ENCODE measurements at regions of chr10 and their contacts with region 1.

Region 1: GRCh38 chr10:95693668-95694534 is at the start of gene TCTN3:
- DNase-seq: peak; percentile 99
- ATAC-seq: peak; percentile 100
- total RNA-seq, gene TCTN3: 9.7 TPM

Region 2: DNA sequence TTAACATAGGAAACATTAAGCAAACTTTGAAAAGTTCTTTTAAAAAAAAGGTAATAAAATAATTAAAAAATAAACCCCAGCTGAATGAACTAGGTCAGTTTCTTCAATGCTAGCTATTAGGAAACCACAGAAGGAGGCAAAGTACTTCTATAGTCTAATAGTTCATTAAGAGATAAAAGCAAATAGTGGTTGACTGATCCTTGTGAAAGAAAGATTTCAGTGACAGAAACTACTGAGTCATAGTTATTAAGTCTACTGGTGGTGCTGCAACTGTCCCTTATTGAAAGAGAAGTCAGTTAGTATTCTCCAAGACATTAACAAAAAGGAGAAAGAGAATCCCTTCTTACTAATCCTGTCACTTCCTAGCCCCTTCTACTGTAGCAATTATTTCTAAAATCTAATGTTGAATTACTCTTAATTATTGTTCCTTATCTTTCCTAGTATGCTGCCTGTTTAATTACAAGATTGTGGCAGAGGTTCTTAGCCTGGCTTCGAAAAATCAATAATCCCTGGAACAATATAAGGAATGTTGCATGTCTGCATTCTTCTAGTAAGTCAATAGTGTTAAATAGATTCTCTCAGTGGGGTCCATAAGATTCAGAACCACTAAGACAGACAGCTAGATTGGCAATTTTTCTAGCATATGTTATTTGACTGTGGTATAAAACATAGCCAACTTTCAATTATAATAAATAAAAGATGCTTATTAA is 18.3 kb before region 1 on chr10:
- intact Hi-C with region 1: no loop called
- DNase-seq: no peak
- ATAC-seq: no peak

Region 3: DNA sequence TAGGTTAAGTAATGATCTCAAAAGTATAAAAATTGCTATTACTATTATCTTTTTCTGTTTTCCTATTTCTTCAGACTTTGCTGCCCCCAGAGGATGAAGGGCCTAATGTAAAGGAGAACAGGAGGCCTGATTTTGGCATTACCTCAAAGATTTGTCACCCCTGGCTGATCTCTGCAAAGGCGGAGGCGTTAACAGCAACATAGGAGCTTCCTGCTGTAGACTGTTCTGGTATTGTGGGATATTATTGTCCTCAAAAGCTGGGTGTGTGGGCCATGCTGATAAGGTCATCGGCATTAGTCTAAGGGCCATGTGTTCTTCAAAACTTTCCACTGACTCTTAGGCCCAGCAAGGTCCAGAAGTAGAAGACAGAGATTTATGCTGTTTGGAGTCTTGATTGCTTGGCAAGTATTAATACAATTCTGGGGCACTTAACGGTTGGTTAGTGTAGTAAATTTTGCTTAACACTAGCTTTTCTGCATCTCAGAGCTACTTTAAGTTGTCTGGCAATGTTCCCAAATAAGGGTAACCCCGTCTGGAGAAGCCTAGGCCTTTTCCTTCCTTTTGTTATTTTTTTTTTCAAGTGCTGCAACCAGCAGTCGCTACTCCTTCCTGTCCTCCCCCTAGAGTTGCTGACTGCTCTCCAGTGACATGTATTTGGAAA is 48.0 kb after region 1 on chr10:
- intact Hi-C with region 1: loop called (anchors 2 kb)
- DNase-seq: no peak
- ATAC-seq: peak; percentile 62

Region 4: DNA sequence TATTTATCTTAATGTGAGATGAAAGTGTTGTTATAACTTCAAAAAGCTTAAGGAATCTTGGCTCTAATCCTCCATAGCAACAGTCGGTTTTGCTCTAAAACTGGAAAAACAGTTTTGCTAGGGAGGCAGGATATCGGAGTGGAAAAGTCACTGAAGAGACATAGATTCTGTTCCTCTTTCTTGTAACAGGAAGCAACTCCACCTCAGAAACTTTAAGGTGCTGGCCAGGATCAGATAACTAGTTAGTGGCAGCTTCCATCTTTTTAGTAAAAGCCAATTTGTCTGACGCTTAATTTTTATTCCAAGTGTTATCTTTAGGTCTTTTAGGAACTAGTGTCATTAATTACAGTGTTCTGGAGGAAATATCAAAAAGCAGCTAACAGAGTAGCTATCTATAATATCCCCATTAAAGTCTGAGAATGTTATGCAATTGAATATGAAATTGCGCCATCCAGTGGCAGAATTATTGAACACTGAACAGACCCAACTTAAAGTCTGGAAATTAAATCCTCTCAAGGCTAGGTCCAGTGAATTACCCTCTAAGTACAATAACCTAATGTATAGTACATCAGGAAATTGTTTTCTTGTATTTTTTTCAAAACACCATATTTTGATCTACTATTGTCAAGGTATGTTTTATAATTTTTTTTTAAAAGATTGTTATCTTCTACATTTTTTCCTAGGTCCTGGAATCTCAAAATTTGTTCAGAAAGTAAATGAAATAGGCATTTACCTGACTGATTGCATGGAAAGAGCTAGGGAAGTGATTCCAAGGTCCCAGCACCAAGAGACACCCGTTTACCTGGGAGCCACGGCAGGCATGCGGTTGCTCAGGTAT is 148.0 kb after region 1 on chr10:
- intact Hi-C with region 1: loop called (anchors 1 kb)
- DNase-seq: no peak
- ATAC-seq: peak; percentile 44

Region 5: GRCh38 chr10:95864906-95865813 is 171.3 kb after region 1 on chr10:
- intact Hi-C with region 1: loop called (anchors 5 kb)
- DNase-seq: no peak
- ATAC-seq: peak; percentile 70

Measured in Right ventricle myocardium inferior (tissue), 1 donor.